Activated CD4-positive, alpha-beta T cell treated with anti-CD3 and anti-CD28 coated beads for 36 hours (primary cell): ENCODE measurements at regions of chr6 and their contacts with region 1.

Region 1: GRCh38 chr6:70310063-70310694 is 7.3 kb upstream of the COL9A1 start:
- DNase-seq: no peak
- ATAC-seq: no peak
- H3K4me3 Mint-ChIP-seq: no peak overlapping the region
- H3K27ac Mint-ChIP-seq: no peak overlapping the region
- H3K4me1 Mint-ChIP-seq: peaks cover 5% of the 10 kb centered on the region
- H3K27me3 Mint-ChIP-seq: peaks cover 23% of the 10 kb centered on the region

Region 2: GRCh38 chr6:70282312-70282918 is 27.8 kb before region 1 on chr6:
- CTCF ChIA-PET with region 1: no interaction called
- POLR2A ChIA-PET with region 1: no interaction called
- intact Hi-C with region 1: no loop called
- DNase-seq: no peak
- ATAC-seq: no peak
- H3K4me3 Mint-ChIP-seq: no peak overlapping the region
- H3K27ac Mint-ChIP-seq: no peak overlapping the region
- H3K4me1 Mint-ChIP-seq: no peaks in the 10 kb centered on the region
- H3K27me3 Mint-ChIP-seq: peaks cover 36% of the 10 kb centered on the region

Region 3: DNA sequence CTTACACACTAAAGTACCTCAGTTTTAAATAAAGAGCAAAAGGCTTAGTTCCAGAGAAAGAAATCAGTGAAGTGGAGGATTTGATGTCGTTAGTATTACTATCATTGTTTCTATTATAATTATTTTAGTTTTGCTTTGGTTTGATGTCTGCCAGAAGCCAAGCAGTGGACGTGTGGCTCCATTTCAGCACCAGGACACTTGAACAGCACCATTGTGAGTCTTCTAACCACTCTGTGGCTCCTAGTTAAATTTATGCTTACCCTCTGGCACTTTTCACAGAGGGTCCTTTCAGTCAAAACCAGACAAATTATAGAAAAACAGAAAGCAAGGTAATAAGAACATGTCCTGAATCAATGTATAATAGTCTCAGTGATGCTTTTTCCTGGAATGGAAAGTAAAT is 10.7 kb before region 1 on chr6:
- CTCF ChIA-PET with region 1: interaction called, 18 read pairs
- POLR2A ChIA-PET with region 1: no interaction called
- intact Hi-C with region 1: no loop called
- DNase-seq: no peak
- ATAC-seq: no peak
- H3K4me3 Mint-ChIP-seq: no peak overlapping the region
- H3K27ac Mint-ChIP-seq: no peak overlapping the region
- H3K4me1 Mint-ChIP-seq: no peaks in the 10 kb centered on the region
- H3K27me3 Mint-ChIP-seq: peaks cover 18% of the 10 kb centered on the region

Region 4: DNA sequence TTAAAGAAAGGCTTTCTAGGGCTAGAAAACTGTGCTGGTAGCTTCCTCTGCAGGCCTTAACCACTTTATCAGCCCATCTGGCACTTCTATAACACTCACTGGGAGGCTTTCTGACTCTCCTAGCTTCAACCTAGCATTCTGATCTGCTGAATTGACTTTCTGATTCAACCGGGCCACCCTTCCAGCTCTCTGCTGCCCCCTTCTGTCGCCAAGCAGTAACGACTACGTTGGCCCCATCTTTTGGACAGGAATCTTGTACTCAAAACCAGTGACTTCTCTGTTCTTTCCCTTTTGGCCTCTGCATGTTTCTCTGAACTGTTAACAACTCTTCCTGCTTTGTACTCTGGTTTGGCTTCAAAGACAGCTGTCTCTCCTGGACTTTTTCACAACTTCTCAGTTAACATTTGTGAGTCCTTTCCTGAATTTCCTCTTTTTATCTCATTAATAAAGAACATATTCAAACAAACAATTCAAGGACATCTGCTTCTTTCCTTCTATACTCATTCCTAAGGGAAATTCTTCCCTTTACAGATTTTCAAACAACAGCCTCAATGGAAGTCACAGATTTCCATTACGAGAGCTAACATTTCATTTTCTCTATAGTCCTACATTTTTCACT is 59.3 kb after region 1 on chr6:
- CTCF ChIA-PET with region 1: interaction called, 126 read pairs
- POLR2A ChIA-PET with region 1: no interaction called
- intact Hi-C with region 1: loop called (anchors 1 kb)
- DNase-seq: peak; percentile 79
- ATAC-seq: peak; percentile 84
- H3K4me3 Mint-ChIP-seq: no peak overlapping the region
- H3K27ac Mint-ChIP-seq: no peak overlapping the region
- H3K4me1 Mint-ChIP-seq: no peaks in the 10 kb centered on the region
- H3K27me3 Mint-ChIP-seq: peaks cover 12% of the 10 kb centered on the region

Region 5: DNA sequence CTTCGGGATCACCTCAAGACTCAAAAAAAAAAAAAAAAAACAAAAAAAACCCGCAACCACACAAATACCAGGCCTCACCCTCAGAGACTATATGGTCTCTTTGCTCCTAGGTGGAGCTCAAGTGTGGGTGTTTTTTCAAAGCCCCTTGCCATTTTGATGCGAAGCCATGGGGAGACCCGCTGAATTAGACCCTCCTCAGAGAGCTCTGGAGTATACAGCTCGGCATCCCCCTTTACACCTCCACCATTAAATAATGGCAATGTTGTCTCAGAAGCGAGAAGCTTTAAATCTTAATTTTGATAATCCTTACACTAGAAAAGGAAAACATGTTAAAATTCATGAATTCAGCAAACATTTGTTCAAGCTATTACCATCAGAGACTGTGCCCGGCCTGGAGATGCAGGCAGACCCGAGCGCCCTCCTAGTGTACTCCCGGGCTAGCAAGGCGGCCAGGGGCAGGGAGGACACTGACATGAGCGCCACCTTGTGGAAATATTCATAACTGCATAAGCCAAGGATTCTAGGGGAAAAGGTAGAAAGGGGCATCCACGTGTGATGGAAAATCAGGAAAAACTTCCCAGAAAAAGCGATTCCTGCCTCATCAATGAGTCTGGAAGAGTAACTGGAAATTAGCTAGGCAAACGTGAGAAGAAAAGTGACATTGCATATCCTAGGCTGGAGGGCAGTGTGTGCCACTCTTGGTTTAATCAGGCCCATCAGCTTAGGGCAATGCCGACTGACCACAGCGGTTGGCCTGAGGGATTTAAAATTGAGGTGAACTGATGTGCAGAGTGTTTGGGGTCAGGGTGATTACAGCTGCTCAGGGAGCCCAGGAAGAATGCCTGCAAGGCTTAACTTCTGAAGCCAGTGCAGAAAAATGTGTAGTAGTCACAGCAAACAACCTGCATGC is 574.1 kb after region 1 on chr6:
- CTCF ChIA-PET with region 1: interaction called, 10 read pairs
- POLR2A ChIA-PET with region 1: no interaction called
- intact Hi-C with region 1: loop called in 1 of 2 experiments (anchors 5 kb)
- DNase-seq: peak; percentile 73
- ATAC-seq: peak; percentile 90
- H3K4me3 Mint-ChIP-seq: no peak overlapping the region
- H3K27ac Mint-ChIP-seq: no peak overlapping the region
- H3K4me1 Mint-ChIP-seq: no peaks in the 10 kb centered on the region
- H3K27me3 Mint-ChIP-seq: peaks cover 7% of the 10 kb centered on the region

Region 6: GRCh38 chr6:71012866-71013469 is 702.8 kb after region 1 on chr6:
- CTCF ChIA-PET with region 1: interaction called, 10 read pairs
- POLR2A ChIA-PET with region 1: no interaction called
- intact Hi-C with region 1: loop called (anchors 1 to 2 kb)
- DNase-seq: peak; percentile 13
- ATAC-seq: peak; percentile 76
- H3K4me3 Mint-ChIP-seq: no peak overlapping the region
- H3K27ac Mint-ChIP-seq: no peak overlapping the region
- H3K4me1 Mint-ChIP-seq: no peaks in the 10 kb centered on the region
- H3K27me3 Mint-ChIP-seq: peaks cover 10% of the 10 kb centered on the region